ENCODE measurements at regions of chr6 and their contacts with region 1.

Region 1: GRCh38 chr6:28895134-28895812 is 28.5 kb downstream of the TRIM27 start:
- H3K4me3 Mint-ChIP-seq: peak overlapping the region; percentile 90
- H3K27ac Mint-ChIP-seq: peak overlapping the region; percentile 99
- H3K4me1 Mint-ChIP-seq: peaks cover 27% of the 10 kb centered on the region
- H3K27me3 Mint-ChIP-seq: peaks cover 8% of the 10 kb centered on the region

Region 2: GRCh38 chr6:28725890-28726348 is 169.4 kb before region 1 on chr6:
- intact Hi-C with region 1: no loop called
- H3K4me3 Mint-ChIP-seq: no peak overlapping the region
- H3K27ac Mint-ChIP-seq: no peak overlapping the region
- H3K4me1 Mint-ChIP-seq: peaks cover 10% of the 10 kb centered on the region
- H3K27me3 Mint-ChIP-seq: peaks cover 64% of the 10 kb centered on the region

Region 3: DNA sequence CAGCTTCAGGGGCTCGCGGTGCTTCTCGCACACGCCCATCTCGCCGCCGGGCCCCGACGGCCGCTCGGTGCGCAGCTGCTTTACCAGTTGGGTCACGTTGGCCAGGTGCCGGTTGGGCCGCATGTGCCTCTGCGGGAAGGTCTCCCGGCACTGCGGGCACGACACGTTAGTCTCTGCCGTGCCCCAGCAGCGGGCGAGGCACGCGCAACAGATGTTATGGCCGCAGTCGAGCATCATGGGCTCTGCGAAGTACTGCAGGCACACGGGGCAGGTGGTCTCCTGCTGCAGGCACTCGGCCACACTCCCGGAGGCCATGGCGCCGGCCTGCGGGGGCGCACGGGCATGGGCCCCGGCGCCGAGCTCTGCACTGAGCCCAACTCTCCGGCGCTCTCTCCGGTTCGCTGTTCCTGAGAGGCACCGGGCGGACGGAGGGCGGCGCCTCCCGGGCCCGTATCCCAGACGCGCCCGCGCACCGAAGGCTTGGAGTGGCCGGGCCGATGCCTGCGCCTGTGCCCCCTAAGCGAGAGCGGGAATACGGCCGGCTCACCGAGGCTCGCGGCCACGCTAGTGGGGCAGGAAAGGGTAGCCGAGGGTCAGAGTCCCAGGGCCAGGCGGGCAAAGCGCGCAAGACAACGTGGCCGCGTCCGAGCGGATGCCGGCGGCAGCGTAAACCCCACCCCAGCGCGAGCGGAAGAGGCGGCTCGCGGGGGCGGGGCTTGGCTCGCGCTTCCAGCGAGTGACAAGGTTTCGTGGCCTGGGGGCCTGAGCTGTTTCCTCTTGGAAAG is 28.2 kb after region 1 on chr6 and contains the start of gene TRIM27:
- intact Hi-C with region 1: loop called (anchors 2 kb)
- H3K4me3 Mint-ChIP-seq: peak within 1 kb of the TSS; percentile 96
- H3K27ac Mint-ChIP-seq: peak within 1 kb of the TSS; percentile 95
- H3K4me1 Mint-ChIP-seq: peaks cover 39% of the 10 kb centered on the region
- H3K27me3 Mint-ChIP-seq: no peaks in the 10 kb centered on the region

Measured in dendritic cell treated with granulocyte-macrophage colony-stimulating factor and Interleukin-4, amounts not matched to agents 40 ng/mL and 50 ng/mL, for 4 days (primary cell).